ENCODE measurements at regions of chr1 and their contacts with region 1.

Region 1: DNA sequence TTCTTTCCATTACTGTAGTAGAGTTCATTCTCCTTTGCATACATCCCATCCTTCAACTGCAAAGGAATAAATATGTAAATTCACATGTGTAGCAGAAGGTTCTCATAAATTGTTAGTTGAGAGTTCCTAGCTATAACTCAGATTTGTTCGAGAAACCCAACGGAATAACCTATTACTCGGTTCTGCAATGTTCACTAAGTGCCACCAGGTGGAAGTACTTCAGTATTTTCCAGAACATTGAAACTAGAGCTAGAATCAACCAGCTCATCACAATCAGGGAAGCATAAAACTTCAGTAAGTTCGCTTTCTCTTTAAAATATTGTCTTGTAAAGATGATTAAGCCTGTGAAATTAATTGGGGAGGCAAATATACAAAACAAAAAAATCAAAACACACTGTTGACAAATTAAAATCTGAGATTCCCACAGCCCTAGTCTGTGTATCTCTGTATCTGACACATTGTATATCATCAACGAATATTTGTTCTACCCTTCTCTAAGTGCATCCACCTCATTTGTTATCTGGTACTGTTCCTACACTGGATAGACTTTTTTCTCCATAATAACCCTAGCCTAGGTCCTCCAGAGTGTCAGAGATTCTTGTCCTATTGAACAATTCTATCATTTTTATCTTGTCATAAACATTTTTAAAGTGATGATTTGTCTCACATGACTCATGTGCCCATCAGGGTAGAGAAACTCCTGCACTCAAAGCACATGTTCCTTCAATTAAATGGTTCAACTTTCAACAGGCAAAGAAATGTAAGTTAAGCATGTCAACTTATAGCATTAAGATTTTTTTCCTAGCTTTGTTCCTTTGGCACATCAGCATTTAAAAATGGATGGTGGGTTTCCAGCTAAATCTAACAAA is 31.9 kb downstream of the MROH9 start:
- DNase-seq: no peak
- H3K4me3 Mint-ChIP-seq: no peak overlapping the region
- H3K27ac Mint-ChIP-seq: no peak overlapping the region
- H3K4me1 Mint-ChIP-seq: no peaks in the 10 kb centered on the region
- H3K27me3 Mint-ChIP-seq: peaks cover 4% of the 10 kb centered on the region

Region 2: GRCh38 chr1:171188388-171189266 is 221.4 kb after region 1 on chr1:
- intact Hi-C with region 1: loop called (anchors 5 kb)
- DNase-seq: no peak
- H3K4me3 Mint-ChIP-seq: no peak overlapping the region
- H3K27ac Mint-ChIP-seq: no peak overlapping the region
- H3K4me1 Mint-ChIP-seq: no peaks in the 10 kb centered on the region
- H3K27me3 Mint-ChIP-seq: peaks cover 11% of the 10 kb centered on the region

Region 3: DNA sequence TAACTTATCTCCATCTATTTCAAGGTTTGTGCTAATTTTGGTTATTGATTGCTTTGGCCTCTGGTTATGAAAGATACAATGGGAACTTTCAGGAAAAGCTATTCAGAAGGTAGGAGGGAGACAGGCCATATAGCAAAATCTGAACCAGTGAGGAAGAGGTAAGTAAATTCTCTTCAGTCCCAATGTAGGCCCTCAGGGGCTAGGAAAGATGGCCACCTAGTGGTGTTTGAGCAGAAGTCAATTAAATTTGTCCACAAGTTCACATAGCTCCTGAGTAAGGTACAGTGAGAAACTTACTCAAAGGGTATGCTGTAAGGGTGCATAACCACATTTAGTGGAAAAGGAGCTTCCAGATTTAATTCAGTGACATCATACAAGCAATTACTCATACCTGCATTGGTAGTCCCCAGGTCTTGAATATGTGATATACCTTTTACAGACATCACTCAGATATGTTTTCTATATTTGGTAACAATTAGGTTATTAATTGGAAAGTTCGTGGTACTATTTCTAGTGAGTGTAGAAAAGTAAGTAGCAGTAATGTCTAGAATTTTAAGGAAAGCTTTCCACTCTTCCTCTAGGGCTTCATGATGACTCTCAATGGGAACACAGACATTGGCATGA is 259.6 kb after region 1 on chr1:
- intact Hi-C with region 1: loop called (anchors 2 kb)
- DNase-seq: no peak
- H3K4me3 Mint-ChIP-seq: no peak overlapping the region
- H3K27ac Mint-ChIP-seq: no peak overlapping the region
- H3K4me1 Mint-ChIP-seq: no peaks in the 10 kb centered on the region
- H3K27me3 Mint-ChIP-seq: peaks cover 5% of the 10 kb centered on the region